AG04449 (cell line): ENCODE measurements at regions of chr3 and their contacts with region 1.

Region 1: DNA sequence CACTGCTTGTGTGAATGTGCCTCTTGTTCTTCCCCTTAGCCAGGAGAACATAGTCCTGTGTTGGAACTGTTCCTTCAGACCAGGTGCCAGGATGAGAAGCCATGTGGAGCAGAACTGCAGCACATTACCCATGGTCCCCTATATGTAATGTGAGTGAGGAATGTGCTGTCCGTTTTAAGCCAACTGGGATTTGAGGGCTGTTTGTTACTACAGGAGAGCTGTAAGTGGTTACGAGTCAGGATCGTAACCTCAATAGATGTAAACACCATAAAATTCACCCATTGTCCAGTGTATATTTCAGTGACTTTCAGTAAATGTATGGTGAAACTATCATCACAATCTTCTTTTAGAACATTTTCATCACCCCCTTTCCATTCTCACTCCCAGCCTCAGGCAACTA is 10.1 kb upstream of the SCAP start:
- DNase-seq: no peak
- H3K4me3 ChIP-seq: no peak overlapping the region
- CTCF ChIP-seq: no peak

Region 2: GRCh38 chr3:47455806-47456452 is 29.9 kb before region 1 on chr3:
- CTCF ChIA-PET with region 1: no interaction called
- POLR2A ChIA-PET with region 1: no interaction called
- DNase-seq: no peak
- H3K4me3 ChIP-seq: no peak overlapping the region
- CTCF ChIP-seq: no peak

Region 3: GRCh38 chr3:47475570-47476329 is 10.1 kb before region 1 on chr3 and contains the start of gene SCAP:
- CTCF ChIA-PET with region 1: interaction called, 22 read pairs
- POLR2A ChIA-PET with region 1: no interaction called
- DNase-seq: no peak
- H3K4me3 ChIP-seq: peak within 1 kb of the TSS; percentile 84
- CTCF ChIP-seq: peak; percentile 97